Dorsolateral prefrontal cortex (tissue), 120 donors: ENCODE measurements at regions of chr7 and their contacts with region 1.

Region 1: GRCh38 chr7:45407730-45408408 is 166.3 kb upstream of the ADCY1 start:
- DNase-seq: peak in 9 of 10 donors; percentile 7 to 81 (median 66)
- H3K4me3 ChIP-seq: no peak overlapping the region
- H3K27ac ChIP-seq: peak overlapping the region in 46 of 59 donors; percentile 0 to 86 (median 65)
- H3K27me3 ChIP-seq: no peaks in the 10 kb centered on the region
- CTCF ChIP-seq: peak in 17 of 56 donors; percentile 8 to 45 (median 21)

Region 2: DNA sequence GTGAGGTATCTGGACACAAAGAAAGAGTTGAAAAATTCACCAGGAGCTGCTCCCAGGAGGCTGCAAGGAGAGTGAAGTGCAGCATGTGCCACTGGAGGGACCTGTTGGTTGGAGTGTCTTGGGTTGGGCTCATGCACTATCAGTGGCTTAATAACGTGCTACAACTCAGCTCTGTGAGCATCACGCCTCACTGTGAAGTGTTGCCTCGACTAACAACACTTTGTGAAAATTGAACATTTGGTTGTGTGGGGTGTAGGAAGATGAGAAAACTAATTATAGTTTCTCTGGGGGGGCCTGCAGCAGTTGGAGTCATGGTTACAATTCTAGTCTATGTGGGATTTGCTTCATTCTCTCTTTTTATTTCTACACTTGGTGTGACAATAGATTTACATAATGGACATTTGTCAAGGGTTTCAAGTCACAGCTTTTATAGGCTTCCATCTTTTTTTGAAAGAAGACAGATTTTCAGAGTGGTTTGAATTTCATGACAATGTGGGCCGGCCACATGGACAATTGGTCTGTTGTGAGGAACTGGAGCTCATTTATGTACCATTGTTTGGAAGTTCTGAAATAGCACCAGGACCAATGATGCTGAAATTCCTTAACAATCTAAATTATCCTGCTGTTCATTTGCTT is 129.0 kb before region 1 on chr7:
- intact Hi-C with region 1: loop called in 1 of 2 experiments (anchors 2 kb)
- DNase-seq: peak in 4 of 10 donors; percentile 19 to 63 (median 57)
- H3K4me3 ChIP-seq: no peak overlapping the region
- H3K27ac ChIP-seq: peak overlapping the region in 14 of 59 donors; percentile 0 to 75 (median 22)
- H3K27me3 ChIP-seq: no peaks in the 10 kb centered on the region
- CTCF ChIP-seq: peak in 2 of 56 donors; percentile 14 to 22

Region 3: GRCh38 chr7:45324791-45325190 is 83.1 kb before region 1 on chr7:
- intact Hi-C with region 1: no loop called
- DNase-seq: no peak
- H3K4me3 ChIP-seq: no peak overlapping the region
- H3K27ac ChIP-seq: no peak overlapping the region
- H3K27me3 ChIP-seq: no peaks in the 10 kb centered on the region
- CTCF ChIP-seq: no peak

Region 4: DNA sequence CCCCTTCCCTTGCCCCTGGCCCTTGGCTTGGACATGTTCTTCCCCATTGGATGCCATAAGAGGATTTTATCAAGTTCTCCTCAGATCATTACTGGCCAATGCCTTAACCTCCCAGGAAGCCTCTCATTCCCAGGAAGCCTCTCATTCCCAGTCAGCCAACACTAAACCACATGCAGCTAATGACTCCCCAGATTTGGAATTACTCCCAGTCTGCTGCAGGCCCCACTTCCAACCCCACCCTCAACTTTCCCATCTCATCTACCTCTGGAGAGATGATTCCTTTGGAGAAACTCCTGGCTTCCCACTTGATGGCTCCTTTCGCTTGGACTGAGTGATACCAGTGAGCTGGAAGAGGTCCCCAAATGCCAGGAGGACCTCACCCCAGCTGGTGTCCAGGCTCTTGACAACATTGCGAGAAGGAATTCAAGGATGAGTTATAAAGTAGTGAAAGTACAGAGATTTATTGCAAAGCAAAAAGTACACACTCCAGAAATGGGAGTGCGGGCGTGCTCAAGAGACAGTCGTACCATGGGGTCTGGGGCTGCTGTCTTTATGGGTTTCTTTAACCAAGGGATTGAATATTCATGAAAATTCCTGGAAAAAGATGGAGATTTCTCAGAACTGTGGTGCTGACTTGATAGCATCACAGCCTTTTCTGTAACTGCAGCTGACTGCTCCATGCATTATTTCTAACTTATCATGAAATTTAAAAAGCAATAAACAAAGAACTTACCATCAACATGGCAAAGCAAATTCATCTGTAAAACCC is 49.1 kb after region 1 on chr7:
- intact Hi-C with region 1: no loop called
- DNase-seq: no peak
- H3K4me3 ChIP-seq: no peak overlapping the region
- H3K27ac ChIP-seq: no peak overlapping the region
- H3K27me3 ChIP-seq: peaks cover 0 to 4% (median 0%) of the 10 kb centered on the region in 45 donors
- CTCF ChIP-seq: no peak

Region 5: DNA sequence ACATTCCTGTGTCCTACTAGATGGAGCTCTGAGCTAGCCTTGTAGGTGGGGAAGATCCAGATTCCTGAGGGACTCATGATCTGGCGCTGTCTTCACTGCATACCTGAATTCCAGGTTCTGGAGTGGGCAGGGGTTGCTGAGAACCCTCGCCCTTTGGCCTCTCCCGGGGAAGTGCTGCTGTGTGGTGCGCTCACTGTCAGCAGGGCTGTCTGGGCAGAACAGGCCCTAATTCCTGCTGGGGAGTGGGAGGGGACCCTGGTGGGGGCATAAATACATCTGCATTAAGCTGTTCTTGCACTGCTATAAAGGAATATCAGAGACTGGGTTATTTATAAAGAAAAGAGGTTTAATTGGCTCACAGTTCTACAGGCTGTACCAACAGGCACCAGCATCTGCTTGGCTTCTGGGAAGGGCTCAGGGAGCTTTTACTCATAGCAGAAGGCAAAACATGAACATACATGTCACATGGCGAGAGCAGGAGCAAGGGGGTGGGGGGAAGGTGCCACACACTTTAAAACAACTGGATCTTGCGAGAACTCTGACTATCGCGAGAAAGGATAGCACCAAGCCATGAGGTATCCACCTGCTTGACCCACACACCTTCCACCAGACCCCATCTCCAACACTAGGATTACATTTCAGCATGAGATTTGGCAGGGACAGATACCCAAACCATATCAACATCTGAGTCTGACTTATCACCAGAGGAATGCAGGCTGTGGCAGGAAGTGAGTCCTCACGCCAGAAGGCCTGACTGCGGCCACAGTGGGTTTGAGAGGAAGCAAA is 281.3 kb after region 1 on chr7:
- intact Hi-C with region 1: no loop called
- DNase-seq: peak in 1 of 10 donors; percentile 16
- H3K4me3 ChIP-seq: no peak overlapping the region
- H3K27ac ChIP-seq: no peak overlapping the region
- H3K27me3 ChIP-seq: no peaks in the 10 kb centered on the region
- CTCF ChIP-seq: no peak

Region 6: DNA sequence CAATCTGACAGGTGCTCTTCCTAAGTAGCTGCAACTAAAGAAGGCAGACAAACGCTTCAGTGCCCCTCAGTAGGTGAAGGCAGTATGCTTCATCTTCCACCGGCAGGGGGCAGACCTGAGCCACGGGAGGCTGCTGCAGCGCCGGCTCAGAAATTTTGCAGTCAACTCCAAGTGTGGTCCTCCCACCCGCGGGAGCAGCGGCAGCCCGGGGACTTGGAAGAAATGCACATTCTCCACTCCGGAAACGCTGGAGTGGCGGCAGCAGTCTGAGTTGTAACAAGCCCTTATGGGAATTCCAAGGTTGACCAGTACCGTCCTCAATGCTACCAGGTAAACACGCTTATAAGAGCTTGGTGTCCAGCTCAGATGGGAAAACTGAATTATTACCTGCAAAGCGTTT is 509.8 kb after region 1 on chr7:
- intact Hi-C with region 1: no loop called
- DNase-seq: peak; percentile 62 to 88 (median 80)
- H3K4me3 ChIP-seq: peak overlapping the region in 27 of 59 donors; percentile 1 to 68 (median 21)
- H3K27ac ChIP-seq: no peak overlapping the region
- H3K27me3 ChIP-seq: peaks cover 0 to 65% (median 34%) of the 10 kb centered on the region in 45 donors
- CTCF ChIP-seq: peak; percentile 83 to 99 (median 96)